ENCODE measurements at regions of chr1 and their contacts with region 1.

Region 1: GRCh38 chr1:207619871-207620542 is 24.9 kb upstream of the CR1L start:
- DNase-seq: no peak
- H3K4me3 ChIP-seq: no peak overlapping the region
- CTCF ChIP-seq: peak; percentile 59

Region 2: GRCh38 chr1:207328004-207328403 is 292.0 kb before region 1 on chr1:
- CTCF ChIA-PET with region 1: no interaction called
- POLR2A ChIA-PET with region 1: no interaction called
- DNase-seq: peak; percentile 60
- H3K4me3 ChIP-seq: no peak overlapping the region
- CTCF ChIP-seq: no peak

Region 3: DNA sequence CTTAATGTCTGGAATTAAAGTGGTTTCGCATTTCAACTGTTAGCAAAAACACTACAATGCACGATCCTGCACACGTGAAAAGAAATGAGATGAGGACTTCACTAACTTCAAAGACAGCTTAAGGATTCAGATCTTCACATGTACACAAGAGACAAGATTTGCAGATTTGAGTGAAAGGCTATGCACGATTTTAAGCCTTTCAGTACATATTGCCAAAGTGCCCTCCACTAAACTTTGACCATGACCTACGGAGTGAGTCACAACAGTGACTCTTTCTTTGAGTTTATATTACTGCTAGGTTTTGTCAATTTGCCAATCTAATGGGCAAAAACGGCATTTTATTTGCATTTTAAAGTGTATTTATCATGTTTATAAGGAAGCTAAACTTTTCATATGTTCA is 16.2 kb before region 1 on chr1:
- CTCF ChIA-PET with region 1: interaction called, 24 read pairs
- POLR2A ChIA-PET with region 1: no interaction called
- DNase-seq: no peak
- H3K4me3 ChIP-seq: no peak overlapping the region
- CTCF ChIP-seq: no peak

Region 4: DNA sequence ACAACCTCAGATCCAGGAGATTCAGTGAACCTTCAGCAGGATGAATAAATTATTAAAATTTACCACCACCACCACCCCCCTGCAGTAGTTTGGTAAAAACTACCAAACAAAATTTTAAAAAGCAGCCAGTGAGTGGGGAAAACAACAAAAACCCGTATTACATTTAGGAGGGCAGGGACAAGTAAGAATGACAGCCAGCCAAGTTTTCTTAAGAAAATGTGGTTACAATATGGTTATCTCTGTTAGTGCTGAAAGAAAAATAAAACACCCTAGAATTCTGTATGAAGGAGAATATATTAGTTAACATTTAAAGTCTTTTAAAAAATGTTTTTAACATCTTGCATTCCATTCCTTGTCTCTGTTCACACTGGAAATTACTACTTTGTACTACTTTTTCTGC is 146.6 kb after region 1 on chr1:
- CTCF ChIA-PET with region 1: no interaction called
- POLR2A ChIA-PET with region 1: no interaction called
- DNase-seq: no peak
- H3K4me3 ChIP-seq: no peak overlapping the region
- CTCF ChIP-seq: no peak

Measured in AG04449 (cell line).